ENCODE measurements at regions of chr2 and their contacts with region 1.

Region 1: DNA sequence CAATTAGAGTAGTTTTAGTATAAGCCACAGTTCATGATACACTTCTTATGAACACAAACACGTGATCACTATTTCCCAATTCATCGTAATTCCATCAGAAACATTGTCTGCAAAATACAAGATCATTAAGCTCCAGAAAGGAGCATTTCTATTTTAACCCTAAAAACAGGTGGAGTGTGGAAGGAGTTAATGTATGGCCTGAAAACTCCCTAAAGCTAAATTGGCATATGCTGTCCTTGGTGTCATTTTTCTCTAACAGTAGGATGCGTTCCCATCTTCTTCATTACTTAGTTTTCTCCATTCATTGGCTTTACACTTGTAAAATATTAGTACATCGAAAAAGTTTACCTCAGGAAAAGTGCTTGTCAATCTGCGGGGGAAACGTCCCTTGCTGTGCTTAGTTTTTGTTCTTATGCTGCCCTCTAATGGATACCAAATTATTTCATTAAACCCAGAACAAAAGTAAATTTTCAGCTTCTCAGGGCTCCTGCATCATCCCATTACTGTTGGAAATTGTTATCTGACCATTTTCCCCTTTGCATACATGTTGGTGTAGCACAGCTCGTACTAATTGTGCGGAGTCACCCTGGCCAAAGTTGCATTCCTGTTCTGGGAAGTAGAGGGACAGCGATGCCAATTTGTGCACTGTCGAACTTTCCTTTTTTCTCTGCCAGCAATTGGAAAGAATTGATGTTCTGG is 153.4 kb downstream of the GPD2 start:
- DNase-seq: no peak
- H3K4me3 Mint-ChIP-seq: no peak overlapping the region
- H3K27ac Mint-ChIP-seq: no peak overlapping the region
- H3K4me1 Mint-ChIP-seq: peaks cover 11% of the 10 kb centered on the region
- H3K27me3 Mint-ChIP-seq: no peaks in the 10 kb centered on the region

Region 2: DNA sequence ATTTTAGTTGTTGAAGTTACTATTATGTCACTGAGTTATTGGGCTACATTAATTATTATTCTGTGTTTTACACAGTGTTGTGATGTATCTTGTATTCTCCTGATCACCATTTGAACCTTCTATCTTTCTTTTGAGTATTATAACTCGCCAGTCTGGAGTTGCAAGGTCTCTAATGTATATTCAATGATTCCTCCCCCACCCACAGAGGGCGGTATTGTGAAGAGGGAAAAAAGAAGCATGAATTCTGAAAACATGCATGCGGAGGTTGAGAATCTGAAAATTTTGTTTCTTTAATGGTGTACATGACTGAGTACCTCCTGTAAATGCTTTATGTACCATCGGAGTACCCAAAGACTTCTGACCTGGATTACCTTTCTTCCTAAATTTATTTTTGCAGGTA is 523.6 kb before region 1 on chr2:
- intact Hi-C with region 1: loop called (anchors 5 kb)
- DNase-seq: no peak
- H3K4me3 Mint-ChIP-seq: no peak overlapping the region
- H3K27ac Mint-ChIP-seq: no peak overlapping the region
- H3K4me1 Mint-ChIP-seq: no peaks in the 10 kb centered on the region
- H3K27me3 Mint-ChIP-seq: no peaks in the 10 kb centered on the region

Region 3: DNA sequence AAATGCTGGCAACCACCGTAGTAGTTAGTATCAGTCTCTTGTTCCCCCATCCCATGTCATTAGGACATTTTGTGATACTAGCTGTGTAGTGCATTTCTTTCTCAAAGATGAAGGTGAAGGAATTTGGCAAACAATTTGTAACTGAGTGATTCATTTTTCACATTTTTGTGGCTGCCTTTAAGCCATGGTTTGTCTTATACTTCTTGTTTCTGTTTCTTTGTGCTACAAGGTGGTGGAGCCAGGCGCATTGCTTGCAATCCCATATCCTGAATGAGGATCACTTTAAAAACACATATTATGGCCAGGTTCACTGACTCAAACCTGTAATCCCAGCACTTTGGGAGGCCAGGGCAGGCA is 112.7 kb before region 1 on chr2:
- intact Hi-C with region 1: no loop called
- DNase-seq: no peak
- H3K4me3 Mint-ChIP-seq: no peak overlapping the region
- H3K27ac Mint-ChIP-seq: peak overlapping the region; percentile 66
- H3K4me1 Mint-ChIP-seq: peaks cover 53% of the 10 kb centered on the region
- H3K27me3 Mint-ChIP-seq: no peaks in the 10 kb centered on the region

Measured in activated T-helper 2 cell treated with anti-CD3 and anti-CD28 coated beads, Interferon-gamma antibody, Interleukin-2, Interleukin-4, amounts not matched to agents 10 μg/mL and 5 μg/mL and 100 μg/mL, durations not matched to agents 14 hours and 24 hours and 36 hours (primary cell).